Motor neuron (in vitro differentiated cells): ENCODE measurements at regions of chr9 and their contacts with region 1.

Region 1: GRCh38 chr9:89278997-89279739 is 31.8 kb upstream of the CKS2 start:
- ATAC-seq: peak in 7 of 8 experiments; percentile 22 to 73 (median 36)
- H3K4me3 ChIP-seq: no peak overlapping the region
- H3K27ac ChIP-seq: no peak overlapping the region
- H3K4me1 ChIP-seq: no peaks in the 10 kb centered on the region

Region 2: DNA sequence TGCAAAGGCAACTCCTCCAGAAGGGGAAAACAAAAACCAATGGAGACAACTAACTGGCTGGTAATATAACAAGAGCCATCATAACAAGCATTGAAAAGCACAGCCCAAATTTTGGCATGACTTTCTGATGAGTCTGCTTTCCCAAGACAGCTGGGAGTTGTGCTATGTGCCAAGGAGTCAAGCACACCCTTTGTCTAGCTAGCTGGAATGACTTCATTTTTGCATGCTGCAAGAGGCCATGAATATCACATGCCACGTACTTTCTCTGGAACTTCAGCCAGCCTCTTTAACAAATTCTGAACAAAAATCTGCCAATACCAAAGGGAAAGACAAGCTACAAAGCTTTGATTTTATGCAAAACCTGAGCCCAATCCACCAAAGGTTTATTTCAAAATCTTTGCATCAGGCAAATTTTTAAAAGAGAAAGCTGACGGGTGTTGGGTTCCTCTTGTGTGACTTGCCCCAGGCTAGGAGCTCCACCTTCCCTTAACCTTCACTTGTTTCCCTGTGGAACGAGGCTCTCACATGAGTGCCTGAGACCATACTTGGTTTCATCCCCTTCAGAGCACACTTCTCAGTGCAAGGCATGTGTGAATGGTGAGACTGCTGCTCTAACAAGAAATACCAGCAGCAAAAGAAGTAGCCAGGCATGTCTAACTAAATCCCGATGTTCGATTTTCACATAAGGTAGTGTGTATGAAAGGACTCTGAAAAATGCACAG is 240.6 kb before region 1 on chr9:
- in situ Hi-C with region 1: loop called in 1 of 9 experiments (anchors 25 kb)
- ATAC-seq: peak in 3 of 8 experiments; percentile 93 to 97 (median 95)
- H3K4me3 ChIP-seq: no peak overlapping the region
- H3K27ac ChIP-seq: no peak overlapping the region
- H3K4me1 ChIP-seq: no peaks in the 10 kb centered on the region

Region 3: GRCh38 chr9:89052470-89053097 is 226.6 kb before region 1 on chr9:
- in situ Hi-C with region 1: loop called in 2 of 9 experiments (anchors 25 kb)
- ATAC-seq: peak in 1 of 8 experiments; percentile 32
- H3K4me3 ChIP-seq: no peak overlapping the region
- H3K27ac ChIP-seq: no peak overlapping the region
- H3K4me1 ChIP-seq: no peaks in the 10 kb centered on the region

Region 4: DNA sequence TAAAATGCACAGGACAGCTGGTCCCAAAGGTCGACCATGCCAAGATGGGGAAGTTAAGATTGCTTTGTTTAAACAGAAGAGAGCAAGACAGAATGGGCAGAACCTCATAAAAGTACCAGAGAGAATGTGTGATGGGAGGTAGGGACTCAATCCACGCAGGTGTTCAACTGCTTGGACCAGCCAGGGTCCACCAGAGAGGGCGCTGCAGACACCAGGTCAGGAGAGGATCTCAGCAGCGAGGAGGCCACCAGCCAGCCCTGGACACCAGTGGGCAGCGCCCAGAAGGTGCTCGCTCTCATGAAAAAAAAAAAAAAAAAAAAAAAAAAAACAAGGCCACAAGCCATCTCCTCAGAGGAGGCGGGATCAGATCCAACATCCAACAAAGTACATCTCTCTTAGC is 182.4 kb before region 1 on chr9:
- in situ Hi-C with region 1: no loop called
- ATAC-seq: peak in 1 of 8 experiments; percentile 24
- H3K4me3 ChIP-seq: no peak overlapping the region
- H3K27ac ChIP-seq: no peak overlapping the region
- H3K4me1 ChIP-seq: no peaks in the 10 kb centered on the region